ENCODE measurements at regions of chr9 and their contacts with region 1.

Region 1: GRCh38 chr9:129958796-129959195 is 84.2 kb downstream of the FNBP1 start:
- DNase-seq: no peak
- CTCF ChIP-seq: no peak

Region 2: GRCh38 chr9:129968690-129969501 is 10.1 kb after region 1 on chr9:
- CTCF ChIA-PET with region 1: interaction called, 11 read pairs
- POLR2A ChIA-PET with region 1: interaction called, 4 read pairs
- DNase-seq: no peak
- CTCF ChIP-seq: no peak

Measured in GM10248 (cell line).